ENCODE measurements at regions of chr1 and their contacts with region 1.

Region 1: GRCh38 chr1:152801333-152801732 is 4.8 kb downstream of the LCE1D start:
- DNase-seq: no peak
- H3K4me3 ChIP-seq: no peak overlapping the region
- H3K27ac ChIP-seq: no peak overlapping the region
- H3K27me3 ChIP-seq: peaks cover 0 to 27% (median 0%) of the 10 kb centered on the region in 45 donors
- CTCF ChIP-seq: no peak

Region 2: DNA sequence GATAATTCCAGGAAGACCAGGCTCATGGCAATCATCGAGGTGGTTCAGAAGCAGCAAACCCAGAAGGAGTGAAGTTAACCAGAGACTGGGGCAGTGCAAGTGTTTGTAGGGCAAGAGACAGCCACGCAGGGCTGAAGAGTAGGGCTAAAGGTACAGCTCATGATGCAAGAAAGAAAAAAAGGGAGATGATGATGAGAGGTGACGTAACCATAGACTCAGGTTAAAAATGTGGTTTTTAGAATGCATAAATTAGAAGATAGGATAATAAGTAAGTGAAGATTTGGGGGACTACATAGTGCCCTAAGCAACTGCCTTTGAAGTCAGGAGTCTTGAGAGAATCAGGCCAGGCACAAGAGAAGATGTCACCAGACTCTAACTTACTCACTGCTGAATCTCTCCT is 58.8 kb after region 1 on chr1:
- intact Hi-C with region 1: loop called in 1 of 2 experiments (anchors 2 kb)
- DNase-seq: no peak
- H3K4me3 ChIP-seq: no peak overlapping the region
- H3K27ac ChIP-seq: no peak overlapping the region
- H3K27me3 ChIP-seq: peaks cover 0 to 13% (median 0%) of the 10 kb centered on the region in 45 donors
- CTCF ChIP-seq: no peak